Uterus (tissue), 4 donors: ENCODE measurements at regions of chr19 and their contacts with region 1.

Region 1: DNA sequence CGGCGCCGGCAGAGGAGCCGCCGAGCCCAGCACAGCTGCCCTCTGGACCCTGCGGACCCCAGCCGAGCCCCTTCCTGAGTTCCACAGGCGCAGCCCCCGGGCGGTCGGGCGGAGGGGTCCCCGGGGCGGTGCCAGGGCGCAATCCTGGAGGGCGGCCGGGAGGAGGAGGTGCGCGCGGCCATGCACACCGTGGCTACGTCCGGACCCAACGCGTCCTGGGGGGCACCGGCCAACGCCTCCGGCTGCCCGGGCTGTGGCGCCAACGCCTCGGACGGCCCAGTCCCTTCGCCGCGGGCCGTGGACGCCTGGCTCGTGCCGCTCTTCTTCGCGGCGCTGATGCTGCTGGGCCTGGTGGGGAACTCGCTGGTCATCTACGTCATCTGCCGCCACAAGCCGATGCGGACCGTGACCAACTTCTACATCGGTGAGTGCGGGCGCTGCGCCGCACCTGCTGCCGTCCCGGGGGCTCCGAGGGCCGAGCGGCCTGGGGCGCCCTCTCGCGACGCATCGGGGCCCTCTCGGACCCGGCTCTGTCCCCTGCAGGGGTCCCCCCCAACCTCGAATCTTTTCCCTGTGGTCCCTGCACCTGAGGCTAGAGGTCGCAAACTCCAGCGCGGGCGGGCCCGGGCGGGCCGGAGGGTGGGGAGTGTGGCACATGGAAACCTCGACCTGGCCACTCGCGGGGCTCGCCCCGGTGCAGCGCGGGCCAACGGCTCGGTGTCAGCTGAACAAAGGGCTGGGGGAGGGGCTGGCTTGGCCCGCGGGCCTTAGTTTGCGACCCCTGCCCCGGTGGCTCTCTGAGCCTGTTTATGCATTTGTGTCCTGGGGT is at the start of gene KISS1R:
- DNase-seq: no peak
- H3K4me3 ChIP-seq: peak within 1 kb of the TSS in 1 of 2 donors; percentile 0
- H3K27ac ChIP-seq: no peak within 1 kb of the TSS
- H3K4me1 ChIP-seq: peaks cover 0 to 38% of the 10 kb centered on the region in 2 donors
- H3K27me3 ChIP-seq: peaks cover 16 to 36% of the 10 kb centered on the region in 2 donors
- CTCF ChIP-seq: peak in 3 of 4 experiments; percentile 6 to 43 (median 21)
- POLR2A ChIP-seq: no peak
- total RNA-seq, gene KISS1R: 0.14 TPM in 1 of 4 donors, not detected in the others

Region 2: DNA sequence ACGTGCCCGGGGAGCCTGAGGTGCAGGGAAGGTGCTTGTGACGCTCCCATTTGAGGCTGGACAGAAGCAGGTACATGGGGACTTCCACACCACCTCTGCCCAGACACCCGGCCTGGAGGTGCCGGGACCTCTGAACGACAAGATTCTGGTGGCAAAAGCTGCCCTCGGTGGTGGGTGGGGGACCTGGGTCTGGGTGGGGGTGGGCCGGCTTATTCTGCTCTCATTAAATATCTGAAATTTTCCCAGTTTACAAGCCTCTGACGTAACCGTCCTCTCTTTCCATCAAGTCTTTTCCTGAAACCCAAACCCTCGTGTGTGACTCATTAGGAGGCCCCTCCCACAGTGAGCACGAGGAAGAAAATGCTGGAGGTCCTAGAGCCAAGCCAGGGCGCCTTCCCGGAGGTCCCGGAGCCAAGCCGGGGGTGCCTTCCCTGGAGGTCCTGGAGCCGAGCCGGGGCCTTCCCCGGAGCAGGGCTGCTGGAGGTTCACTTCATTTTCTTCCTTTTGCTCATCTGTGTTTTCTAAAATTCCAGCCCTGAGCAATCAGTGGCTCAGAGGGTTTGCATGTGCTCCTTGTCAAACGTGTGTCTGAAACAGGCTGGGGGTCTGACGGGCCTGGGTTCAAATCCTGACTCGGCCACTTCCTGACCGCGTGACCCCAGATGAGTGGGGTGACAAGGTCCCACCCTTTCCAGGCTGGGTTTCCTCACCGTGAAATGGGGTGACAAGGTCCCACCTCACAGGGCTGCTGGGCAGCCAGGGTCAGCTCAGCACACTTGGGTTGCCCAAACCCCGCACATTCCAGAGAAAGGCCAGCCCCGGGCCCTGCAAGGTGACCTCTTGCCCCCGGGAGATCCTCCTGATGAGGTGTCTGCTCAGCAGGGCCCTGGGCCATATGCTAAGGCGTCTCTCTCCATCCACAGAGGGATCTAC is 48.0 kb before region 1 on chr19:
- intact Hi-C with region 1: loop called (anchors 5 kb)
- DNase-seq: peak; percentile 94
- H3K4me3 ChIP-seq: no peak overlapping the region
- H3K27ac ChIP-seq: peak overlapping the region; percentile 92 to 96
- H3K4me1 ChIP-seq: peaks cover 5 to 17% of the 10 kb centered on the region in 2 donors
- H3K27me3 ChIP-seq: no peaks in the 10 kb centered on the region
- CTCF ChIP-seq: no peak
- POLR2A ChIP-seq: no peak

Region 3: GRCh38 chr19:976429-976968 is 59.0 kb after region 1 on chr19:
- intact Hi-C with region 1: no loop called
- DNase-seq: no peak
- H3K4me3 ChIP-seq: no peak overlapping the region
- H3K27ac ChIP-seq: no peak overlapping the region
- H3K4me1 ChIP-seq: no peaks in the 10 kb centered on the region
- H3K27me3 ChIP-seq: no peaks in the 10 kb centered on the region
- CTCF ChIP-seq: no peak
- POLR2A ChIP-seq: no peak

Region 4: DNA sequence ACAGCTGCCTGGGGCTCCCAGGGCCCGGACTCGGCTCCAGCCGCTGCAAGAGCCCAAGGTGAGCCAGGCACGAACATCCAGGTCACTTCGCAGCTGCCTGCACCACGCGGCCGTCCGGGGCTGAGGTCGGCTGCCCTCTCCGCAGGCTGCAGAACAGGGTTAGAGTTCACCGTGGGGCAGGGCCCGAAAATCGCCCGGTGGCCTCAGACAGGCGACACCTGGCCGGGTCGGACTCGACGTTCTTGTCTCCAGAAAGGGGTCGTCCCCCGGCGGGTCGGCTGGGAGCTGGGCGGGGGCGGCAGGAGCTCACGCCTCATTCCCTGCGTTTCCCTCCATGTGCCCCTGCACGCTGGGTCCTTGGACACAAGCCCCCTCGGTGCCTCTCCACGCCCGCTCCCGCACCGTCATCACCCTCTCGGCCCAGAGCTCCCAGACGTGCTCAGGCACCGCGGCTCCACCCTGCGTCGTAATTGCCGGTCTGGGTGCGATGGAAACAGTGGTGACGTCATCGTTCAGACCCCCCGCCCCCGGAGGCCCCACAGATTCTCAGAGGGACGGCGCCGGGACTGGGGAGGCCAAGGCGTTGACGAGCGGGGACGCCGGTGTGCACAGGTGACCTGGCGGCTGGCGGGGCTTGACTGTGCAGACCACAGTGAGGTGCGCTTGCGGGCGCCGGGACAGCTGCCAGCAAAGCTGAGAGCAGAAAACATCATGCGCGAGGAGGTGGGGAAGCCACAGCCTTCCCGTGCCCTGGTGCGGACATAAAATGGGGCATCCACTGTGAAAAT is 78.7 kb after region 1 on chr19:
- intact Hi-C with region 1: no loop called
- DNase-seq: peak in 1 of 2 donors; percentile 43
- H3K4me3 ChIP-seq: no peak overlapping the region
- H3K27ac ChIP-seq: no peak overlapping the region
- H3K4me1 ChIP-seq: peaks cover 0 to 1% of the 10 kb centered on the region in 2 donors
- H3K27me3 ChIP-seq: peaks cover 25 to 35% of the 10 kb centered on the region in 2 donors
- CTCF ChIP-seq: no peak
- POLR2A ChIP-seq: no peak